Mucosa of descending colon (tissue), 3 donors: ENCODE measurements at regions of chr6 and their contacts with region 1.

Region 1: DNA sequence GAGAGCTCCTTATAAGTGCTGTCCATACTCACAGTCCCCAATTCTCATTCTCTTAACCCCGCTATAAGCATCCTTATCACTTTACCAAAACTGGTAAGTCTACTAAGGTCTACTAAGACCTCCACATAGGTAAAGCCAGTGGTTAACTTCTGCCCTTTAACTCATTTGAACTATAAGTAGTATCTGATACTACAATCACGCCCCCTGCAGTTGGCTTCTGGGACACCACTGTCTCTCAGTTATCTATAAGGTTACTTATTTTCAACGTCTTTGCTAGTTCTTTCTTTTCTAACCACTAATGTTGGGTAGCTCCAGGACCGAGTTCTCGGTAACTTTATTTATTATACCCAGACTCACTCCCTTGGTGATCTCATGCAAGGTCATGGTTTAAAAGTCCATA is 142.6 kb downstream of the ARHGAP18 start:
- DNase-seq: peak in 1 of 3 donors; percentile 40
- ATAC-seq: no peak
- H3K4me3 ChIP-seq: no peak overlapping the region
- H3K4me1 ChIP-seq: no peaks in the 10 kb centered on the region
- CTCF ChIP-seq: no peak

Region 2: DNA sequence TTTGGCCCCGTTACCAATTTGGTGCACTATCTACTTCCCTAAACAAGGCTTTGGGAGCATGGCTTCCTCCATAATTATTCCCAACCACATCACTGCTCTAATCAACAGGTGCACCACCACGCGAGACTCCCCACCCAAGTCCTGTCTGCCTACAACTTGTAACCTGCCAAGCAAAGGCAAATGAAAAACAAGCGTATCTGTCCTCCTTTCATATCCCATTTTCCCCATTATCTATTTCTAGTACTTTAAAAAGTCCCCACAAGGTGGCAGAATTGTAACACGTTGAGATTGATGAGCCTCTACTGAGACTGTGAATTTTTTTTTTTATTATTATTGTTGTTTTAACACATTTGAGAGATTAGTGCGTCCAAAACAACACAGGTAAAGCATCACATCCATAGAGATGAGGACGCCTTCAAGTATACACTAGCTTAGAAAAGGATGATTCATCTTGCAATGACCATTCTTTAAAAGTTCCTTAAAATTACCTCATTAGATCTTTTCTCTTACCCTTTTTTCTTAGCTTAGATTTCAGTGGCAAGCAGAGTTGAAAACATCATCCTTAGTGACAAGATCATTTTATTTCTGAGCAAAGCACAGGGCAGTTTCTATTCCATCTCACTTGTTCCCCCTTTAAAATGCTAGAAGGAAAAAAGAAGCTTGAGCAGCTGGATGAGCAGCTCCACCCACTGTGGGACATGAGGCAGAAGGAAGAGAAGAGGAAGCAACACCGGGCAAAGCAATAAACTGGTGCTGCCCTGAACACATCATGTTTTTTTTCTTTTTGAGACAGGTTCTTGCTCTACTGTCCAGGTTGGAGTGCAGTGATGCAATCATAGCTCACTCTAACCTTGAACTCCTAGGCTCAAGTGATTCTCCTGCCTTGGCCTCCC is 68.2 kb before region 1 on chr6:
- intact Hi-C with region 1: loop called in 1 of 2 experiments (anchors 10 kb)
- DNase-seq: peak in 1 of 3 donors; percentile 48
- ATAC-seq: peak; percentile 71
- H3K4me3 ChIP-seq: no peak overlapping the region
- H3K4me1 ChIP-seq: no peaks in the 10 kb centered on the region
- CTCF ChIP-seq: no peak